ENCODE measurements at regions of chr16 and their contacts with region 1.

Region 1: DNA sequence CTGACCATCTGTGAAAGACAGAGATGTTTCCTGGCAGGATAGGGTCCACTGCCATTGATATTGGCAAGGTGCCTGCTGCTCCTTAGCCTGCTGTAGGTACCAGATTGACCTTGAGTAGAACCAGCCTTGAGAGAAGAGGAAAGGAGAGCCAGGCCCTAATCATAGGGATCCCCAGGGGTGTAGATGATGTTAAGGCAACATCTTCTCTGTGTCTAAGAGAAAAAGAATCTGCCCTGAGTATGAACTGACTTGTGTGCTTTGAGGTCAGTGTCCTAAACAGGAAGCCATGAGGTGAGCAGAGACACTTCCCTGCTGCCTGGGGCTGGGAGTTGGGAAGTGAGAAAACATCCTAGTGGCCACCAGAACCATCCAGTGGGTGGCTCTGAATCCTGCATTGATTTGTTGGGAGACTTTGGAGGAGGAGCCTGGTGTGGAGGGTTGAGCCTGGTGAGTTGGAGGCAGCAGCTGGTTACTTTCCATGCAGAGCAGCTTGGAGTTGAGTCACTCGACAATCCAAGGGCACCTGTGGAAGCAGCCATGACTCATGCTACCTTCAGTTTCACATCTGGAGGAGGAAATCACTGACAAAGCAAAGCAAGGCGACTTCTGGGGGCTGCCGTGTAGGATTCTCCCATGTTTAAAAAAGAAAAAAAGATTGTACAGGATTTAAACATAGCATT is 47.8 kb downstream of the BMERB1 start:
- DNase-seq: no peak
- H3K4me3 Mint-ChIP-seq: no peak overlapping the region
- H3K27ac Mint-ChIP-seq: peak overlapping the region; percentile 82
- H3K4me1 Mint-ChIP-seq: peaks cover 15% of the 10 kb centered on the region
- H3K27me3 Mint-ChIP-seq: no peaks in the 10 kb centered on the region

Region 2: GRCh38 chr16:15440852-15441251 is 41.4 kb before region 1 on chr16:
- intact Hi-C with region 1: loop called (anchors 5 kb)
- DNase-seq: no peak
- H3K4me3 Mint-ChIP-seq: no peak overlapping the region
- H3K27ac Mint-ChIP-seq: no peak overlapping the region
- H3K4me1 Mint-ChIP-seq: peaks cover 2% of the 10 kb centered on the region
- H3K27me3 Mint-ChIP-seq: peaks cover 3% of the 10 kb centered on the region

Region 3: GRCh38 chr16:15457958-15458357 is 24.2 kb before region 1 on chr16:
- intact Hi-C with region 1: no loop called
- DNase-seq: no peak
- H3K4me3 Mint-ChIP-seq: no peak overlapping the region
- H3K27ac Mint-ChIP-seq: no peak overlapping the region
- H3K4me1 Mint-ChIP-seq: peaks cover 6% of the 10 kb centered on the region
- H3K27me3 Mint-ChIP-seq: peaks cover 10% of the 10 kb centered on the region